ENCODE measurements at regions of chr1 and their contacts with region 1.

Region 1: GRCh38 chr1:160768295-160768657 is 27.7 kb upstream of the LY9 start:
- DNase-seq: peak; percentile 82
- ATAC-seq: peak; percentile 92
- H3K4me3 Mint-ChIP-seq: peak overlapping the region; percentile 83
- H3K27ac Mint-ChIP-seq: peak overlapping the region; percentile 97
- H3K4me1 Mint-ChIP-seq: peaks cover 38% of the 10 kb centered on the region
- H3K27me3 Mint-ChIP-seq: no peaks in the 10 kb centered on the region

Region 2: DNA sequence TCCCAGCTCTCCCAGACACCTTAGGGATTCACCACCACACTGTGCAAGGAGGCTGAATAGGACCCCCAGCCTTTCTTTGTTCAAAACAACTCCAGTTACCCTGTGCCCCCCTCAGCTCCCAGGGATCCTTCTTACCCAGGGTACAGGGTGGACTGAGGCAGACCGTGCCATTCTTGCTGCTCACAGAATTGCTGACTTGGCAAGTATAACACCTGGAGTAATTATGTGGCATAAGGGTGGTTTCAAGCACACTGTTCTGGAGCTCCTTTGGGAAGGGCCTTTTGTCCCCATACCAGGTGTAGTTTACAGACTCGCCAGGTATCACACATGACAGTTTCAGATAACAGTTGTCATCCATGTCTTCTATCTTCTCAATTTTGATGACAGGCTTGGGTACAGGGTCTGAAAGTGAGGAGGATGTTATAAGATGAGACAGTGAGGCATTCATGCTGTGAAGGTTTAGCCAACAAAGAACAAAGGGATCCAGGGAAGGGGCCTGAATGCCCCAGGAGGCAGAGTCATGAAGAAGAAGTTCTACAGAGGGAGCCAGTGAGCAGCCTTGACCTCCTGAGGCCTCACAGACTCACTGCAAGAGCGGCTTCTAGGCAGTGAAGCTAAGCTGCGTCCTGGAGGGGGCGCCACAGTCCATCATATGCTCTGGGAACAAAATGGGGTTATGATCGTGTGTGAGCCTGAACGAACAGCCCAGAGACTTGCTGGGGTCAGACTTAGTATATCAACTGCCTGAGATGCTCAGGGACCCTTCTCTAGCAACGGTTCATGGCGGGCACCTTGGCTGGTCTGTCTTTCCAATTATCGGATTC is 87.0 kb before region 1 on chr1:
- POLR2A ChIA-PET with region 1: interaction called, 25 read pairs
- DNase-seq: peak; percentile 90
- ATAC-seq: peak; percentile 75
- H3K4me3 Mint-ChIP-seq: peak overlapping the region; percentile 76
- H3K27ac Mint-ChIP-seq: peak overlapping the region; percentile 88
- H3K4me1 Mint-ChIP-seq: peaks cover 73% of the 10 kb centered on the region
- H3K27me3 Mint-ChIP-seq: no peaks in the 10 kb centered on the region

Region 3: GRCh38 chr1:160711602-160712311 is 56.5 kb before region 1 on chr1 and contains the start of gene CD48:
- POLR2A ChIA-PET with region 1: interaction called, 17 read pairs
- DNase-seq: peak; percentile 53
- ATAC-seq: peak; percentile 38
- H3K4me3 Mint-ChIP-seq: no peak within 1 kb of the TSS
- H3K27ac Mint-ChIP-seq: no peak within 1 kb of the TSS
- H3K4me1 Mint-ChIP-seq: peaks cover 30% of the 10 kb centered on the region
- H3K27me3 Mint-ChIP-seq: no peaks in the 10 kb centered on the region
- total RNA-seq, gene CD48: 379 to 386 TPM

Region 4: DNA sequence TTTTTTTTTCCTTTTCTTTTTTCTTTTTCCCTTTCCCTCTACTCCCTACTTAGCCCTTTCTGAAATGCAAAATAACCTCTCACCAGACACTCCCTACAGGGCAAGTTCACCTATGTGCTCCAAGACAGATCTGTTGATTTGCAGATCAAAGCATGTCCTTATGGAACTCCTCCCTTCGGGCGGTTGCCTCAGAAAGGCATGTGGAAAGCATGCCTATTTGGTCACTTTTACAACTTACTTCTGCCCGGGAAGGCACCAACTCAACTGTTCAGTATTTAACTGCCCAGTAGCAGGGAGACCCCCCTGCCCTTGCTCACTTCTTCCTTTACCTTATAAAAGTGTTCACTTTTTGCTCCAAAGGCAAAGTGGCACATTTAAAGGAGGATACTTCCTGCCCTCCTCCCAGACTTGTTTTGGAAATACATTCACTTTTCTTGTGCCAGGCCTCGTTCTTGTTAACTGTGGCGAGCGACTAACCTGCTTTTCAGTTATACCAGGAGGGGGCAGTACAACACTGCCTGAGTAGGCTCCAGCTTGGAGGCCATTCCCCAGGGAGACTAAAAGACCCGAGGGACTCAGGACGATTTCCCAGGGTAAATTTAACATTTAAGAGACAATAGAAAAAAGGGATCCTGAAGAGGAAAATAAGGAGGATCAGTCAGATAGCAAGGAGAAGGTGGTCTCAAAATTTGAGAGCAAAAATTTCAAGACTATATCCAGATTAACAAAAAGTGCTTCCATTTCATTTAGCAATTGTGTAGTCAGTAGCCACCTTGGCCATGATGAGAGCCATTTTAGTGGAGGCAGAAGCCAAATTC is 41.6 kb before region 1 on chr1:
- POLR2A ChIA-PET with region 1: interaction called, 39 read pairs
- DNase-seq: no peak
- ATAC-seq: peak; percentile 74
- H3K4me3 Mint-ChIP-seq: no peak overlapping the region
- H3K27ac Mint-ChIP-seq: no peak overlapping the region
- H3K4me1 Mint-ChIP-seq: peaks cover 22% of the 10 kb centered on the region
- H3K27me3 Mint-ChIP-seq: no peaks in the 10 kb centered on the region

Region 5: GRCh38 chr1:160744199-160744851 is 24.0 kb before region 1 on chr1:
- POLR2A ChIA-PET with region 1: interaction called, 17 read pairs
- DNase-seq: no peak
- ATAC-seq: peak; percentile 74
- H3K4me3 Mint-ChIP-seq: peak overlapping the region; percentile 79
- H3K27ac Mint-ChIP-seq: peak overlapping the region; percentile 85
- H3K4me1 Mint-ChIP-seq: peaks cover 88% of the 10 kb centered on the region
- H3K27me3 Mint-ChIP-seq: no peaks in the 10 kb centered on the region

Region 6: GRCh38 chr1:160755911-160756848 is 12.1 kb before region 1 on chr1:
- POLR2A ChIA-PET with region 1: interaction called, 16 read pairs
- DNase-seq: no peak
- ATAC-seq: peak; percentile 82
- H3K4me3 Mint-ChIP-seq: peak overlapping the region; percentile 60
- H3K27ac Mint-ChIP-seq: peak overlapping the region; percentile 95
- H3K4me1 Mint-ChIP-seq: peaks cover 47% of the 10 kb centered on the region
- H3K27me3 Mint-ChIP-seq: no peaks in the 10 kb centered on the region

Region 7: DNA sequence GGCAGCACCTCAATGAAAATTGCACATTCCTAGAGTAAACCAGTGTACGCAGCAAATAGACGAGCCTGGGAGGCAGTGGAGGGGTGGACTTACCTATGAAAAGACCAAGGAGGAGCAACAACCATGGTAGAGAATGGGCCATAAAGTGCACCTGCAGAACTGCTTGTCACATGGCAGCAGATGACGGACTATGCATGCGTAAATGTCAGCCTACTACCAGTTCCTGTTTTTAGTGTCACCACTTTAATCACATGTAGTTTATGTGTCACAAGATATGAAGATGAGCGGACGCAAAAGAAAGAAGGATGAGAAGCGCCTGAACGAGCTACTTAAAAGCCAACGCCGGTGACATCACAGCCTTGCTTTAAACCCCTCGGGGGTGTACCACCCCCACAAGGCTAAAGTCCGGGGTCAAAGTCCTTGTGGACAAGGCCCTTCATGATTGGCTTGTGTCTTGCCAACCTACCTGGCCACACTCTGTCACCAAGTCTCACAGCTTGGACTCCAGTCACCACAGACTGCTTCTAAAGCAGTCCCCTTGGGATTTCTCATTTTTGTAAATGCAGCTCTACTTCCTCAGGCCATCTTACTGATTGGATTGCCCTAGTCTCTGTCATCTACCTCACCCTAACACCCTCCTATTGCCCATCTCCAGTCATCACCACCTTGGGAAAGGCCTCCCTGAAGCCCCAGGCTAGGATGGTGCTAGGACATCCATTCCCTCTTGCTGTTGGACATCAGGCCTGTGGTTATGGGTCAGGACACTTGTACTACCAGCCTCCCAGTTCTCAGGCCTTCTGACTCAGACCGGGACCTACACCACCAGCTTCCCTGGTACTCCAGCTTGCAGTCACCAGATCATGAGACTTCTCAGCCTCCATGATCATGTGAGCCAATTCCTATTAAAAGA is 21.7 kb after region 1 on chr1:
- POLR2A ChIA-PET with region 1: no interaction called
- DNase-seq: no peak
- ATAC-seq: no peak
- H3K4me3 Mint-ChIP-seq: no peak overlapping the region
- H3K27ac Mint-ChIP-seq: no peak overlapping the region
- H3K4me1 Mint-ChIP-seq: peaks cover 10% of the 10 kb centered on the region
- H3K27me3 Mint-ChIP-seq: peaks cover 3% of the 10 kb centered on the region

Region 8: DNA sequence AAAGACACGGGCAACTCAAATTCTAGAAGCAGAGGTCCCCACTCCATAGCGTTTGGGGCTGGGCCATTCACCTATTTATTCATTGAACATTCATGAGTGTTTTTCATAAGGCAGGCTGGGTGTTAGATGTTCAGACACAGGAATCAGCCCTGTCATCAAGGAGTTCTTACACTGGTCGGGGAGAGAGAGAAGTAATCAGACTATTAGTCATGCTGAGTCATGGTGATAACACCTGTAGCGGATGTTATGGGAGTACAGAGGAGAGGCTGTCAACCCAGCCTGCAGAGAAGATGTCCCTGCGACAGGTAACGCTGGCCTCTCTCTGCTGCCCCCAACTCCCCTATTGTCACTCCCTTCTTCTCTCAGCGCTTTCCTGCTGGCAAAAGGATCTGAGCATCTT is 44.9 kb after region 1 on chr1:
- POLR2A ChIA-PET with region 1: no interaction called
- DNase-seq: no peak
- ATAC-seq: no peak
- H3K4me3 Mint-ChIP-seq: no peak overlapping the region
- H3K27ac Mint-ChIP-seq: no peak overlapping the region
- H3K4me1 Mint-ChIP-seq: peaks cover 4% of the 10 kb centered on the region
- H3K27me3 Mint-ChIP-seq: no peaks in the 10 kb centered on the region

Measured in activated naive CD8-positive, alpha-beta T cell treated with anti-CD3 and anti-CD28 coated beads, Interleukin-2, amount 10 ng/mL, durations not matched to agents 7 days and 5 days (primary cell).